Transverse colon (tissue), 4 donors: ENCODE measurements at regions of chr5 and their contacts with region 1.

Region 1: DNA sequence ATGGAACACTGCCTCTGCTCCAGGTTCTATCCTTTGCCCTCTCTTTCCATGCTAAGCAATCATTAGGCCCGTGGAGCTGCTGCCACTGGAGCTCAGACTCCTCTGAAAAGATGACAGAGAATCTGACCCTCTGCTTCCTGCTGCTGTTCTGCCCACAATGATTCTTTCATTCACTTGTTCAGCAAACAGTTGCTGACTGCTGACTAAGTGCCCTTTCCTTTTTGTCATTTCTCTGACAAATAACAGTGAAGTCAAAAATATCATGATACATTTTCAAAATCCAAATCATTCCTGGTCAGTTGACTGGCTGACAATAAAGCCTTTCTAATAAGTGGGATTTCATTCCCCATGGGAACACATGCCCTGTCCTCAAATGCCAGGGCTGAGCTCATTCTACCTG is 110.1 kb downstream of the SIL1 start:
- DNase-seq: no peak
- H3K4me3 ChIP-seq: no peak overlapping the region
- H3K27ac ChIP-seq: no peak overlapping the region
- H3K4me1 ChIP-seq: peaks cover 5 to 17% (median 14%) of the 10 kb centered on the region in 4 donors
- H3K27me3 ChIP-seq: no peaks in the 10 kb centered on the region
- CTCF ChIP-seq: no peak
- EP300 ChIP-seq: no peak
- POLR2A ChIP-seq: no peak

Region 2: GRCh38 chr5:139105621-139106071 is 17.6 kb after region 1 on chr5:
- in situ Hi-C with region 1: no loop called
- intact Hi-C with region 1: loop called (anchors 1 kb)
- DNase-seq: no peak
- H3K4me3 ChIP-seq: no peak overlapping the region
- H3K27ac ChIP-seq: peak overlapping the region; percentile 59 to 82 (median 71)
- H3K4me1 ChIP-seq: peaks cover 5 to 22% (median 14%) of the 10 kb centered on the region in 4 donors
- H3K27me3 ChIP-seq: no peaks in the 10 kb centered on the region
- CTCF ChIP-seq: no peak
- EP300 ChIP-seq: no peak
- POLR2A ChIP-seq: no peak